Activated CD4-positive, alpha-beta T cell treated with anti-CD3 and anti-CD28 coated beads for 36 hours (primary cell): ENCODE measurements at regions of chr3 and their contacts with region 1.

Region 1: DNA sequence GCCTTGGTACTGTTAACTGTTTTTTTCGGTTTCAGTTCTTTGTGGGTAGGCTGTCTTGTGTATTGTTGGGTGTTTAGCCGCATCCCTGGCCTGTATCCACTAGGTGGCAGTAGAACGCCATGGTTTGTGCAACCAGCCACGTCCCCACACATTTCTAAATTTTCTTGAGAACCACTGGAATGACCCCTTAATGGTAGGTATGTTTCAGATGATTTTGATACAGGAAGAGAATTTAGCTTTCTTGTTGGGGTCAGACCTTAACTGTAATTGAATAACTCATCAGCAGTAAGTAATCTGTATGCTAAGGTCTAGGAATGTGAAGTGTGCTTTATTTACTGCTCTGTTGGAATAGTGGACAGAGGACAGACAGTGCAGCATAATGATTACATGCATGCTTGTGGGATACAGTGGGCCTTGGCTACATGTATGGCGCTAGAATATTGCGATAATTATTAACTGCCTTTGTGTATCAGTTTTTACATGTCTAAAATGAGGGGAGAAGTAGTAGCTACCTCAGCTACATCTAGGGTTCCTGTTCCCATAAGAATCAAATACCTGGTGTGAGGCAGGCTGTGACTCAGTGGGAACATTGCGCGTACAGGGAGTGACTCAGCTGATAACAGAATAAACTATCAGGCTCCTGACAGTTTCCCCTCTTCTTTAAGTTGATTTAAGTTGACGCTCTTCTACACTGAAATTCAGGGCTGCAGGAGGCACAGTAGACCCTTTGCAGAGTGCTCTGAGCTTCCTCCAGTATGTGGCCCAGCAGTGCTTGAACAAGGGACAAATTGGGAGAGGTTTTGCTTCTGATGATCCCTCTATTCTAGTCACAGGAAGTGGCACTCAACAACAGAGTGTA is 25.0 kb upstream of the GPR171 start:
- DNase-seq: peak; percentile 87
- ATAC-seq: peak; percentile 75
- H3K4me3 Mint-ChIP-seq: no peak overlapping the region
- H3K27ac Mint-ChIP-seq: peak overlapping the region; percentile 64
- H3K4me1 Mint-ChIP-seq: peaks cover 58% of the 10 kb centered on the region
- H3K27me3 Mint-ChIP-seq: no peaks in the 10 kb centered on the region

Region 2: GRCh38 chr3:150538324-150539208 is 689.5 kb before region 1 on chr3:
- CTCF ChIA-PET with region 1: no interaction called
- POLR2A ChIA-PET with region 1: no interaction called
- intact Hi-C with region 1: no loop called
- DNase-seq: no peak
- ATAC-seq: no peak
- H3K4me3 Mint-ChIP-seq: no peak overlapping the region
- H3K27ac Mint-ChIP-seq: no peak overlapping the region
- H3K4me1 Mint-ChIP-seq: peaks cover 24% of the 10 kb centered on the region
- H3K27me3 Mint-ChIP-seq: no peaks in the 10 kb centered on the region

Region 3: GRCh38 chr3:151210676-151211381 is 17.2 kb before region 1 on chr3:
- CTCF ChIA-PET with region 1: interaction called, 61 read pairs
- POLR2A ChIA-PET with region 1: interaction called, 3 read pairs
- intact Hi-C with region 1: no loop called
- DNase-seq: peak; percentile 20
- ATAC-seq: peak; percentile 38
- H3K4me3 Mint-ChIP-seq: peak overlapping the region; percentile 41
- H3K27ac Mint-ChIP-seq: peak overlapping the region; percentile 89
- H3K4me1 Mint-ChIP-seq: peaks cover 58% of the 10 kb centered on the region
- H3K27me3 Mint-ChIP-seq: no peaks in the 10 kb centered on the region

Region 4: DNA sequence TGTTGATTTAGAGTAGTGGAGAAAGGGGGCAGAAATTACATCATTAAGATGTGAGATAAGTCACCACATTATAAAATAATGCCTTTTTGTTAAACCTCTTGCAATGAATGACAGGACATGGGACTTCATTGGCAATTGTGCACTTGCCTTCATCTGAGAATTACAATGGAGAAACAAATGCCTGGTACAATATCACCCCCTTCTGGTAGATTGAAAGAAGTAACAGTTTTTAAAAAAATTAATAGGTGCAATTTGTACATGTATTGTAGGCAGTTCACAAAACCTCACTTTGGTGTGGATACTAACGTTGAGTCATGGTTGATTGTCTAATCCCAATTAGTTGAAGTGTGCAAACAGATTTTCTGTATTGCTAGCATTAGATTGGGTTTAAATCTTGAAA is 54.9 kb after region 1 on chr3:
- CTCF ChIA-PET with region 1: interaction called, 124 read pairs
- POLR2A ChIA-PET with region 1: no interaction called
- intact Hi-C with region 1: loop called (anchors 1 kb)
- DNase-seq: no peak
- ATAC-seq: peak; percentile 57
- H3K4me3 Mint-ChIP-seq: no peak overlapping the region
- H3K27ac Mint-ChIP-seq: no peak overlapping the region
- H3K4me1 Mint-ChIP-seq: peaks cover 29% of the 10 kb centered on the region
- H3K27me3 Mint-ChIP-seq: no peaks in the 10 kb centered on the region

Region 5: DNA sequence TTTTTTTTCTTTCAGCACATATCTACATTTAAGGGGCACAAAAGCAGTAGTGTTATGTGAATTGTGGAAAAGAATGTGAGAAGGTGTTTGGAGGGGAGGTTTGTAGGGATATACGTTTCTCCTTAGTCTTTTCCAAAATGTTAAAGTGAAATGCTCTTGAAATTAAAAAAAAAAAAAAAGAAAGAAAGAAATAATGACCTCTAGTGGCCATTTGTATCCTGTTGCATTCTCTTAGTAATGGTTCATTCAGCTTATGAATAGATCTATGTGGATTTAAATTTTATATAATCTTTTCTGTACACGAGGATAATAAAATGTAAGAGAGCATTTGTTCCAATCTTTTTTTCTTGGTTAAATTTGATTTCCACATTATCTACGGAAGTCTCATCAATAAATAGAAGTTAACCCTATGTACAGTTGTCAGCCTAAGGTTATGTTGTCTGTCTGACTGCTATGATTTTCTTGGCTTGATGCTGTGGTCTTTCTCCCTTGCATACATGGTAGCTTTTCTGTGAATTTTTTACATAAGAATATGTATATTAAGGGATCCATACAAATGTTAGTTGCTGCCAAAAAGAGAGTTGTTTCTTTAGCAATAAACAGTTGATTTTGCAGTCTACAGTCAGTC is 99.6 kb after region 1 on chr3:
- CTCF ChIA-PET with region 1: interaction called, 17 read pairs
- POLR2A ChIA-PET with region 1: no interaction called
- intact Hi-C with region 1: loop called (anchors 1 to 5 kb)
- DNase-seq: no peak
- ATAC-seq: peak; percentile 17
- H3K4me3 Mint-ChIP-seq: no peak overlapping the region
- H3K27ac Mint-ChIP-seq: no peak overlapping the region
- H3K4me1 Mint-ChIP-seq: peaks cover 25% of the 10 kb centered on the region
- H3K27me3 Mint-ChIP-seq: peaks cover 10% of the 10 kb centered on the region

Region 6: GRCh38 chr3:151918253-151919029 is 690.4 kb after region 1 on chr3:
- CTCF ChIA-PET with region 1: no interaction called
- POLR2A ChIA-PET with region 1: no interaction called
- intact Hi-C with region 1: loop called in 1 of 2 experiments (anchors 1 kb)
- DNase-seq: no peak
- ATAC-seq: no peak
- H3K4me3 Mint-ChIP-seq: no peak overlapping the region
- H3K27ac Mint-ChIP-seq: no peak overlapping the region
- H3K4me1 Mint-ChIP-seq: no peaks in the 10 kb centered on the region
- H3K27me3 Mint-ChIP-seq: no peaks in the 10 kb centered on the region